CD4-positive, alpha-beta memory T cell (primary cell): ENCODE measurements at regions of chr21 and their contacts with region 1.

Region 1: GRCh38 chr21:34614633-34615486 is at the start of gene RCAN1:
- DNase-seq: peak; percentile 85 to 91 (median 88)
- H3K4me3 ChIP-seq: peak within 1 kb of the TSS; percentile 18 to 61
- H3K4me3 Mint-ChIP-seq: peak within 1 kb of the TSS; percentile 90 to 95 (median 92)
- H3K27ac ChIP-seq: peak within 1 kb of the TSS; percentile 31
- H3K27ac Mint-ChIP-seq: peak within 1 kb of the TSS; percentile 85 to 96 (median 93)
- H3K4me1 ChIP-seq: peaks cover 16% of the 10 kb centered on the region
- H3K4me1 Mint-ChIP-seq: peaks cover 14 to 25% (median 20%) of the 10 kb centered on the region in 4 donors
- H3K27me3 ChIP-seq: no peaks in the 10 kb centered on the region
- H3K27me3 Mint-ChIP-seq: peaks cover 0 to under 1% of the 10 kb centered on the region in 2 donors
- total RNA-seq, gene RCAN1: 4.7 to 6.3 TPM

Region 2: DNA sequence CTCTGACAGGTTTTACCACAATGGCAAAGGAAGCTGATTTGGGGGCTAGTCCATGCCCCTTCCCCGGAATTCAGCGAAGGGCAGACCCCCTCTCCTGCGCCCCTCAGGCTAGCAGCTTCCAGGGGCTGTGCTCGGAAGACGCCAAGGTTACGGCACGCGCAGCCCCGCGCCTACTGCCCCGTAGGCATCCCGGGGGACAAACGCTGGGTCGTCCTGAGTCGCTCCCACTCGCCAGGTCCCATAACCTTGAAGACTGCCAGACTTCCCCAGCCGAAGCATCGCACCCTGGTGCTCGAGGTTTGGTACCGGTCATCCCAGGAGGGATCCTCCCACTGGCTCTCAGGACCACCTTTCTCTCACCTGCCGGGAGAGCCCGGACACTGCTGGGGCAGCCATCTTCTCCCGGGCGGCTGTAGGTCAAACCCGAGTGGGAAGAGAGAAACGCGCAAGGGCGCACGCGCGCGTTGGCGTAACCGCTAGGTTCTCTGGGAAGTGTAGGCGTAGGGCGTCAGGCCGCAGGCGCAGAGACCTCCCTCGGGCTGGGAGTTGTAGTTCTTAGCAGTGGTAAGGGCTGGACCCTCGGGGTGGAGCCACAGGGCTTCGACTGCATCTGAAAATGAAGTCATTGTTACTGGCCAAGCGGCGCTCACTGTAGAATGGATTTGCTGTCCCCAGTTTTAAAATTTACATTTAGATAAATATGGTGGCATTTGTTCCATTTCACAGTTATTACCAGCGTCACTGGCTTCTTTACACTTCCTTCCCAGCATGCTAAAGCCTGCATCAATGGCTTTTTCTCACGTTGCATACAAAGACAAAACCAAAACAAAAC is 699.3 kb before region 1 on chr21 and contains the start of gene ATP5PO:
- CTCF ChIA-PET with region 1: no interaction called
- POLR2A ChIA-PET with region 1: interaction called, 3 read pairs
- intact Hi-C with region 1: loop called (anchors 1 kb)
- DNase-seq: peak; percentile 94 to 96 (median 94)
- H3K4me3 ChIP-seq: peak within 1 kb of the TSS; percentile 90
- H3K4me3 Mint-ChIP-seq: peak within 1 kb of the TSS; percentile 97 to 99 (median 98)
- H3K27ac ChIP-seq: peak within 1 kb of the TSS; percentile 91
- H3K27ac Mint-ChIP-seq: peak within 1 kb of the TSS; percentile 92 to 99 (median 99)
- H3K4me1 ChIP-seq: peaks cover 35% of the 10 kb centered on the region
- H3K4me1 Mint-ChIP-seq: peaks cover 17 to 34% (median 28%) of the 10 kb centered on the region in 4 donors
- H3K27me3 ChIP-seq: no peaks in the 10 kb centered on the region
- H3K27me3 Mint-ChIP-seq: no peaks in the 10 kb centered on the region
- total RNA-seq, gene ATP5PO: 126 to 143 TPM